PC-3 (cell line): ENCODE measurements at regions of chrX and their contacts with region 1.

Region 1: GRCh38 chrX:44400588-44400987 is 57.1 kb upstream of the EFHC2 start:
- DNase-seq: peak; percentile 95
- ATAC-seq: peak; percentile 100
- H3K4me3 ChIP-seq: no peak overlapping the region
- H3K27ac ChIP-seq: peak overlapping the region; percentile 57
- H3K4me1 ChIP-seq: peaks cover 22% of the 10 kb centered on the region
- H3K27me3 ChIP-seq: no peaks in the 10 kb centered on the region
- CTCF ChIP-seq: no peak

Region 2: DNA sequence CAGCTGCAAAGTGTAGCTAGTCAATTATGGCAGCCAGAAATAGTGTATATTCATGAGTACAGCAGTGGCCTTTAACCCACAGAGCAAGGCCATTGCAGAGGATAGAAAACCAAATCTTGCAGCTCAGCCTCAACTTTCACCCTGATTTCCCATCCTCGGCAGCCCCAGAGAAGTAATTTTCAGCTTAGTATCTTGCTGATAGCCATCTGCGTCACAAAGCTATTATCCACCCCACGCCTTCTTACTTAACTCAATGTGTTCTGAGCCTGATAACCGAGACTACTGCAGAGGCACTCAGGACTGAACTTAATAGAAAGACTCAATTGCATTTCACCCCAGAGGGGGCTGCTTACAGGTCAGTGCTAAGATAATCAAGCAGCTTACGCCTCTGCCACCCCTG is 919.0 kb before region 1 on chrX:
- CTCF ChIA-PET with region 1: no interaction called
- POLR2A ChIA-PET with region 1: no interaction called
- intact Hi-C with region 1: no loop called
- DNase-seq: no peak
- ATAC-seq: no peak
- H3K4me3 ChIP-seq: no peak overlapping the region
- H3K27ac ChIP-seq: no peak overlapping the region
- H3K4me1 ChIP-seq: no peaks in the 10 kb centered on the region
- H3K27me3 ChIP-seq: no peaks in the 10 kb centered on the region; the same call in 1 of the 2 replicates
- CTCF ChIP-seq: no peak

Region 3: GRCh38 chrX:44162964-44163475 is 237.6 kb before region 1 on chrX:
- CTCF ChIA-PET with region 1: no interaction called
- POLR2A ChIA-PET with region 1: no interaction called
- intact Hi-C with region 1: no loop called
- DNase-seq: no peak
- ATAC-seq: no peak
- H3K4me3 ChIP-seq: no peak overlapping the region
- H3K27ac ChIP-seq: no peak overlapping the region
- H3K4me1 ChIP-seq: no peaks in the 10 kb centered on the region
- H3K27me3 ChIP-seq: no peaks in the 10 kb centered on the region
- CTCF ChIP-seq: no peak

Region 4: DNA sequence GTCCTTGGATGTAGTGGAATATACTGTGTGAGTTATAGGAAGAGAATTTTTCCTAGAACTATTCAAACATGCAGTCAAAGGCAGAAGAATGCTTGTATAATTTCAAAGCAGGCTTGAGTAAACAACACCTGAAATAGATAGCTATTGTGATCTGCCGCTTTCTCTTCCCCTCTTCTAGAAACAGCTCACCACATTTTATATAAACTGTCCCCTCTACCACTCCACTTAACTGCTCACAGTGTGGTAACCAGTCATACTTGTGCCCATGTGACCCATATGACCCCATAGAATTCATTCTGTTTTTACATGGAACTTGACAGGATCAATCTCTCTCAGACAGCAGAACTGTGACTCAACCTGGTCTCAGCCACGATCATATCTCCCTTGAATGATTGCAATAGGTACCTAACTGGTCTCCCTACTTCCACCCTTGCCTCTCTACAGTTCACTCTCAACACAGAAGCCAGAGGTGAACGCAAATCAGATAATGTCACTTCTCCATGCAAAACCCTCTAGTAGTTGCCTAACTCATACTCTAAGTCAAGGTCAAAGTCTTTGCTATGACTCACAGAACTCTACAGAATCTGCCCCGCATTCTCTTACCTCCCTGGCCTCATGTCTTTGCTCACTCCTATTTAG is 28.5 kb after region 1 on chrX:
- CTCF ChIA-PET with region 1: no interaction called
- POLR2A ChIA-PET with region 1: no interaction called
- intact Hi-C with region 1: loop called (anchors 1 kb)
- DNase-seq: peak; percentile 74
- ATAC-seq: peak; percentile 69
- H3K4me3 ChIP-seq: peak overlapping the region; percentile 28; the same call in 1 of the 2 replicates
- H3K27ac ChIP-seq: peak overlapping the region; percentile 90
- H3K4me1 ChIP-seq: peaks cover 53% of the 10 kb centered on the region
- H3K27me3 ChIP-seq: no peaks in the 10 kb centered on the region
- CTCF ChIP-seq: no peak